PC-9 (cell line): ENCODE measurements at regions of chr1 and their contacts with region 1.

Region 1: GRCh38 chr1:153922972-153923925 is at the start of gene GATAD2B:
- DNase-seq: peak; percentile 99
- H3K4me3 ChIP-seq: peak within 1 kb of the TSS; percentile 75
- H3K27ac ChIP-seq: peak within 1 kb of the TSS; percentile 76
- H3K4me1 ChIP-seq: peaks cover 32% of the 10 kb centered on the region
- H3K27me3 ChIP-seq: no peaks in the 10 kb centered on the region
- CTCF ChIP-seq: no peak
- total RNA-seq, gene GATAD2B: 51.4 and 56.1 TPM in 2 replicates

Region 2: DNA sequence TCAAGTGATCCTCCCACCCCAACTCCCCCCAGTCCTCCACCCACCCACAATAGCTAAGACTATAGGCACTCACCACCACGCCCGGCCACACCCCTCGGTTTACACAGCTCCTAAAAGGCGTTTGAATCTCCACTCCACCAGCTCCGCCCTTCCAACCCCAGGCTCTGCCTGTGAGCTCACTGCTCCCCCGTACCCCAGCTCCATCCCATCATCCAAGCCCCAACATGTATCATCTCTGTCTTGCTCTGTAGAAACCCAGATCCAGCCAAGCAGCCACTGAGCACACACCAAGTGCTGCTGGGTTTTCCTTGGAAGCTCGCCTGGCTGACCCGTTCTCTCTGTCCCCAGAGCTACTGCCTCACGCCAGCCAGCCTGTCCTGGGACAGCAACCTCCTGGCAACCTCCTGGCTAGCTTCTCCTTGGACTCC is 345.6 kb before region 1 on chr1:
- CTCF ChIA-PET with region 1: no interaction called
- POLR2A ChIA-PET with region 1: interaction called, 12 read pairs
- intact Hi-C with region 1: no loop called
- DNase-seq: no peak
- H3K4me3 ChIP-seq: no peak overlapping the region
- H3K27ac ChIP-seq: no peak overlapping the region
- H3K4me1 ChIP-seq: peaks cover 14% of the 10 kb centered on the region
- H3K27me3 ChIP-seq: no peaks in the 10 kb centered on the region
- CTCF ChIP-seq: no peak

Region 3: GRCh38 chr1:153771841-153772593 is 151.2 kb before region 1 on chr1:
- CTCF ChIA-PET with region 1: no interaction called
- POLR2A ChIA-PET with region 1: no interaction called
- intact Hi-C with region 1: no loop called
- DNase-seq: no peak
- H3K4me3 ChIP-seq: no peak overlapping the region
- H3K27ac ChIP-seq: no peak overlapping the region
- H3K4me1 ChIP-seq: 0 out of 2 replicates have a peak, but pooled peaks cover 12% of the 10 kb centered on the region
- H3K27me3 ChIP-seq: no peaks in the 10 kb centered on the region
- CTCF ChIP-seq: peak; percentile 37; the same call in 1 of the 2 replicates

Region 4: GRCh38 chr1:153805042-153805745 is 118.1 kb before region 1 on chr1:
- CTCF ChIA-PET with region 1: no interaction called
- POLR2A ChIA-PET with region 1: no interaction called
- intact Hi-C with region 1: loop called (anchors 10 kb)
- DNase-seq: peak; percentile 33 to 70
- H3K4me3 ChIP-seq: no peak overlapping the region
- H3K27ac ChIP-seq: peak overlapping the region; percentile 86
- H3K4me1 ChIP-seq: peaks cover 8% of the 10 kb centered on the region
- H3K27me3 ChIP-seq: no peaks in the 10 kb centered on the region
- CTCF ChIP-seq: no peak

Region 5: GRCh38 chr1:153958111-153958960 is 35.1 kb after region 1 on chr1 and contains the start of gene CRTC2:
- CTCF ChIA-PET with region 1: no interaction called
- POLR2A ChIA-PET with region 1: interaction called, 5 read pairs
- intact Hi-C with region 1: loop called (anchors 1 kb)
- DNase-seq: peak; percentile 94 to 96
- H3K4me3 ChIP-seq: peak within 1 kb of the TSS; percentile 67
- H3K27ac ChIP-seq: peak within 1 kb of the TSS; percentile 28
- H3K4me1 ChIP-seq: peaks cover 29% of the 10 kb centered on the region
- H3K27me3 ChIP-seq: no peaks in the 10 kb centered on the region
- CTCF ChIP-seq: no peak
- total RNA-seq, gene CRTC2: 44.5 and 63.6 TPM in 2 replicates